ENCODE measurements at regions of chr9 and their contacts with region 1.

Region 1: GRCh38 chr9:111631071-111631971 is at the start of gene DNAJC25:
- DNase-seq: peak; percentile 97
- H3K4me3 Mint-ChIP-seq: peak within 1 kb of the TSS; percentile 93
- H3K27ac Mint-ChIP-seq: peak within 1 kb of the TSS; percentile 80
- H3K4me1 Mint-ChIP-seq: peaks cover 45% of the 10 kb centered on the region
- H3K27me3 Mint-ChIP-seq: no peaks in the 10 kb centered on the region
- total RNA-seq, gene DNAJC25: 7.3 and 7.4 TPM in 2 replicates

Region 2: GRCh38 chr9:111458139-111459009 is 172.9 kb before region 1 on chr9:
- intact Hi-C with region 1: no loop called
- DNase-seq: no peak
- H3K4me3 Mint-ChIP-seq: no peak overlapping the region
- H3K27ac Mint-ChIP-seq: no peak overlapping the region
- H3K4me1 Mint-ChIP-seq: peaks cover 17% of the 10 kb centered on the region
- H3K27me3 Mint-ChIP-seq: no peaks in the 10 kb centered on the region

Region 3: DNA sequence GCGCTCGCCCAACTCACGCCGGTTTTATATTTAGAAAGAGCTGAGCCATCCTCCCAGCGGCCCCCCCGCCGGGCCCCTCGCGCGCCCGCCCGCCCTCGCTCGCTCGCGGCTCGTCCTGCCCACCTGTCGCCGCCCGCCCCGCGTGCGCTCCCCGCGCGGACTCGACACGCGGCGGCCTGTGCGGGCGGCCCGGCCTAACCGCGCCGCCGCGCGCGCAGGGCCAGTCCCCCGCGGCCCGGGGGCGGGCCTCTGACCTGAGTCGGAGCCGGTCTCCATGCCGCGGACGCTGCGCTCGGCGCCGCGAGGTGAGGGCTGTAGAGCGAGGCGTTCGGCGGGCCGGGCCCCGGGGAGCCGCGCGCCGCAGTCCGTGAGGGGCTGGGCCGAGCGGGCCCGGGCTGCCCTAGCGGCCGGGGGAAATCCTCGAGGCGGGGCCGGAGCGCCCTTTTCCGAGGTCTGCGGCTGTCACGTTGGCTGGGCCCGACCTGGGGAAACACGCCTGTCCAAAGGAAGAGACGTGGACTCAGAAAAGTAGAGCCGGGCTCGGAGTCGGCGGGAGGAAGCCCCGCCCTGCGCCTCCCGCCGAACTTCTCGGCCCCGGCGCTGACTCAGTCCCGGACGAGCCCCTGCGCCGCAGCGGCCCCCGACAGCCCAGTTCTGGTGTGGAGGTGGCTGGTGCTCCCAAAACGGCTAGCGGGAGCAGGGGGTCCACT is 147.3 kb before region 1 on chr9 and contains the start of gene ECPAS:
- intact Hi-C with region 1: loop called (anchors 2 kb)
- DNase-seq: peak; percentile 59
- H3K4me3 Mint-ChIP-seq: peak within 1 kb of the TSS; percentile 84
- H3K27ac Mint-ChIP-seq: peak within 1 kb of the TSS; percentile 82
- H3K4me1 Mint-ChIP-seq: peaks cover 23% of the 10 kb centered on the region
- H3K27me3 Mint-ChIP-seq: peaks cover 9% of the 10 kb centered on the region
- total RNA-seq, gene ECPAS: 96.8 and 107 TPM in 2 replicates

Region 4: DNA sequence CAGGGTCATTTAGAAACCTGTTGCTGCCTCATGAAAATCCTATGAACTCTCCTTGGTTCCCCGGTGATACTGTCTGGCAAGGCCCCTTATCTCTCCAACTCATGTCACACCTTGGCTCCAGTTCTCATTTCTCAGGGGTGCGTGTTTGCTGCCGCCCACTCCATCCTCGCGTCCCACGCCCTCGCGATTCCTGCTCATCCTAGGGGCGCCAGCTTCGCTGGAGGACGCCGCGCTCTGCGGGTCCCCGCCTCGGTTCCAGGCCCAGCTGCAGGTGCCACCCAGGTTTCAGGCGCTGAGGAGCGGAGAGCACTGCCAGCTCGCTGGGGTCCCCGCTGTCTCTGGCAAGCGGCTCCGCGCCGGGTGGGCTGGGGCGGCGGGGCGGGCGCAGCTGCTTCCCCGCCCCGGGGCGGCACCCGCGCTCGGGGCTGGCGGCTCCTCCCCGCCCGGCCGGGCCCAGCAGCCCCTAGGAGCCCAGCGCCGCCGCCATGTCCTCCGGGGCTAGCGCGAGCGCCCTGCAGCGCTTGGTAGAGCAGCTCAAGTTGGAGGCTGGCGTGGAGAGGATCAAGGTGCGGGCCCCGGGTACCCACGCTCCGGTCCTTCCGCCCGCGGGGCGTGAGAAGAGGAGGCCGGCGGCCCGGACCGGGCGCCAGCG is 30.0 kb after region 1 on chr9 and contains the start of gene GNG10:
- intact Hi-C with region 1: loop called (anchors 1 kb)
- DNase-seq: peak; percentile 62
- H3K4me3 Mint-ChIP-seq: peak within 1 kb of the TSS; percentile 87
- H3K27ac Mint-ChIP-seq: peak within 1 kb of the TSS; percentile 83
- H3K4me1 Mint-ChIP-seq: peaks cover 19% of the 10 kb centered on the region
- H3K27me3 Mint-ChIP-seq: no peaks in the 10 kb centered on the region
- total RNA-seq, gene GNG10: 30.7 and 30.9 TPM in 2 replicates

Region 5: DNA sequence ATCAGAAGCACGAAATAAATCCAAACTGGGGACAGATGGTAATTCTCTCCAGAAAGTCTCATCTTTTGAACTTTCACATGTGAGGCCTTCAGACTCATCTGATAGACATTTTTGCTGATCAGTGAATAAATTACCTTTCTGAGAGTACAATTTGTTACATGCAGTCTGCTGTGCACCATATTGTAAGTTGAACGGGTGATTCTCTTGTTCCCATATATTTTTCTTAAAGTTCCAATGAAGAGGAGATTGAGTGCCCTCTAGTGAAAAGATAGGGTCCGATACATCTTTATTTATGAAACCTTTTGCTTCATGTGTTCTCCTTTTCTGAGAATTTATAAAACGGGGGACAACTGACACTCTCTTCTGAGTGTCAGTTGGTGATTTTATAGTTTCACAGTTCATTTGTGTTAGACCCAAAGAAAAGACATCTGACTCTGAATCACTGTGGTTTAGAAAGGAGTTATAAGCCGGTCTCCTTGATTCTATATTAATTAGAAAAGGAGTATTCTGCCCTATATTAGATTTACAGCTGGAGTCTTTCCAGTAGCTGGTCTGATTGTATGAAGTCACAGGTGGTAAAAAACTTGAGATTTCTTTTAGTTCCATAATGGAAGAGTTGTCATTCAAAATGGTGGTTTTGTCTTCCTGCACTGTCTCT is 60.5 kb after region 1 on chr9:
- intact Hi-C with region 1: loop called (anchors 2 kb)
- DNase-seq: no peak
- H3K4me3 Mint-ChIP-seq: no peak overlapping the region
- H3K27ac Mint-ChIP-seq: no peak overlapping the region
- H3K4me1 Mint-ChIP-seq: no peaks in the 10 kb centered on the region
- H3K27me3 Mint-ChIP-seq: no peaks in the 10 kb centered on the region

Measured in activated T-helper 2 cell treated with anti-CD3 and anti-CD28 coated beads, Interferon-gamma antibody, Interleukin-2, Interleukin-4, amounts not matched to agents 10 μg/mL and 5 μg/mL and 100 μg/mL, durations not matched to agents 14 hours and 24 hours and 36 hours (primary cell).